K562 (cell line): ENCODE measurements at regions of chr16 and their contacts with region 1.

Region 1: DNA sequence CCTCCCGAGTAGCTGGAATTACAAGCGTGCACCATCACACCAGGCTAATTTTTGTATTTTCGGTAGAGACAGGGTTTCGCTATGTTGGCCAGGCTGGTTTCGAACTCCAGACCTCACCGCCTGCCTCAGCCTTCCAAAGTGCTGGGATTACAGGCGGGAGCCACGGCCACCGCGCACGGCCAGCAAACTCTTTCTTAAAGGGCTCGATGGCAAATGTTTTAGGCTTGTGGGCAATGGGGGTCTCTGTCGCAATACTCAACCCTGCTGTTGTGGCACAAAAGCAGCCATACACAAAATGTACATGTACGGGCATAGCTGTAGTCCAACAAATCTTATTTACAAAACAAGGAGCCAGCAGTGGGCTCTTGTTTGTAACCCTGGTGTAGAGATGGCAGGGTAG is 18.4 kb downstream of the PARN start:
- DNase-seq: no peak
- ATAC-seq: no peak
- H3K4me3 ChIP-seq: no peak overlapping the region
- H3K27ac ChIP-seq: no peak overlapping the region
- H3K4me1 ChIP-seq: no peaks in the 10 kb centered on the region
- H3K27me3 ChIP-seq: no peaks in the 10 kb centered on the region
- CTCF ChIP-seq: no peak
- EP300 ChIP-seq: no peak
- POLR2A ChIP-seq: no peak
- RAD21 ChIP-seq: no peak

Region 2: DNA sequence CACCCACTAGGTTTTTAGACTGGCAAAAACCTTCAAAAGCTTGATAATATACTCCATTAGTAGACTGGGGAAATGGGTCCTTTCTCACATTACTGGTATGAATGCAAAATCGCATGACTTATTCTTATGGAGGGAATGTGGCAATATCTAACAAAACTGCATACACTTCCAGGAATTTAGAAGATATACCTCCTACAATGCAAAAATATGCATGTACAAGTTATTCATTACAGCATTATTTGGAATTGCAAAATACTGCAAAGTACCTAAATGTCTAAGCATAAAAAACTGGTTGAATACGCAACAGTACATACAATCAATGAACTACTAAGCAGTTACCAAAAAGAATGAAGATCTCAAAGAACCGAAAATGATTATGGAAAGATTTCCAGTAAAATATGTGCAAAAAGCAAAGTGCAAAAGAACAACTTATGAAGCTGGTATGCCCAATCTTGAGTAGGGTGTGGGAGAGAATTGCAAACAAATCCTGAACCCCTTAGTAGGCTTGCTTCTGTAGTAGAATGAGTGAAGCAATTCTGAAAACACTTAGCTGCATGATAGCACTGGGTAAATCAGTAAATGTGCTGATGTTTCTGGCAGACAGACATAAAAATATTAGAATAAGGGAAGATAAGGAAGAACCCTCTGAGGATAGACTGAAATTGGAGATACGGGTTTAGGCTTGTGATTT is 161.7 kb before region 1 on chr16:
- CTCF ChIA-PET with region 1: no interaction called
- POLR2A ChIA-PET with region 1: no interaction called
- in situ Hi-C with region 1: no loop called
- intact Hi-C with region 1: no loop called
- DNase-seq: no peak
- ATAC-seq: no peak
- H3K4me3 ChIP-seq: no peak overlapping the region
- H3K27ac ChIP-seq: no peak overlapping the region
- H3K4me1 ChIP-seq: no peaks in the 10 kb centered on the region
- H3K27me3 ChIP-seq: no peaks in the 10 kb centered on the region
- CTCF ChIP-seq: no peak
- EP300 ChIP-seq: no peak
- POLR2A ChIP-seq: no peak
- RAD21 ChIP-seq: no peak

Region 3: DNA sequence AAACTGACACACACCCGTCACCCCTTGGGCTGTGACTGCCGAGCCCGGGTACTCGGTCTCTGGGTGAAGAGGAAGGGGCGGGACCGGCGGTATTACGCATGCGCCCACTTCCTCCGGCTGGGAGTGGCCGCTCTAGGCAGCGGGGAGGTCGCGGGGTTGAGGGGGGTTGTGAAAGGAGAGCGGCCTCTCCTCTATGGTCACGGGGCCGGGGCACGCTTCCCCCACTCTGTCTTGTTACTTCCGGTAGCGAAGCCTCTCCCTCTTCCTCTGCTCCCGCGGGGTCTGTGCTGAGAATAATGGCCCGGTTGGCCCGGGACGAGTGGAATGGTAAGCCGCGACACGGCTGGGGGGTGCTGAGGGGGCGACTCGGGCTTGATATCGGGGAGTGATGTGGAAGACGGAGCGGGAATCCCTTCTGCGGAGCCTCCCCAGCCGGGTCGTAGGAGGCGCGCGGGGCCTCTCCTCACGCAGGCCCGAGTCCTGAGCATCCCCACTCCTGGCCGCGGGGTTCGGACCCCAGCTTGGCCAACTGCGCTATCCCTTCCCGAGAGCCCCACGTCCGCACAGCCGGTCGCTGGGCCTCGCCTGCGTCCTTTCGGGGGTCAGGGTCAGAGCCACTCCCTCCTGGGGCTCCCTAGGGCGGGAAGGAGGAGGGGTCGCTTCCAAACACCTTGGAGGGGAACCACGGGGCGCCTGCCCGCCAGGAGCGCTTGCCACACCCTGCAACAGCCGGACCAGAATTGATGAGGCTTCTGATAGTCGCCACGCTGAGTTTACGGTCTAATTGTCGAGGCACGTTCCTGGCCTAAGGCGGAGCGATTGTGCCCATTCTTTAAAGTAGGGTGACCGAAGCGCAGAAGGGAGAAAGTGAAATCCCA is 21.3 kb after region 1 on chr16 and contains the start of gene BFAR:
- CTCF ChIA-PET with region 1: no interaction called
- POLR2A ChIA-PET with region 1: interaction called, 10 read pairs
- in situ Hi-C with region 1: no loop called
- intact Hi-C with region 1: no loop called
- DNase-seq: peak; percentile 90 to 98 (median 93)
- ATAC-seq: peak; percentile 84
- H3K4me3 ChIP-seq: peak within 1 kb of the TSS; percentile 87
- H3K27ac ChIP-seq: peak within 1 kb of the TSS; percentile 99
- H3K4me1 ChIP-seq: peaks cover 26 to 32% of the 10 kb centered on the region in 2 experiments
- H3K27me3 ChIP-seq: no peaks in the 10 kb centered on the region
- CTCF ChIP-seq: no peak
- EP300 ChIP-seq: peak; percentile 22; the same call in 1 of the 2 replicates
- POLR2A ChIP-seq: peak; percentile 69
- RAD21 ChIP-seq: no peak
- polyA plus RNA-seq, gene BFAR: 55.2 to 57.7 TPM